ENCODE measurements at regions of chr9 and their contacts with region 1.

Region 1: GRCh38 chr9:13491493-13492424 is 212.3 kb upstream of the MPDZ start:
- DNase-seq: no peak
- H3K4me3 Mint-ChIP-seq: no peak overlapping the region
- H3K27ac Mint-ChIP-seq: peak overlapping the region; percentile 41
- H3K4me1 Mint-ChIP-seq: peaks cover 56% of the 10 kb centered on the region
- H3K27me3 Mint-ChIP-seq: no peaks in the 10 kb centered on the region
- CTCF ChIP-seq: no peak

Region 2: DNA sequence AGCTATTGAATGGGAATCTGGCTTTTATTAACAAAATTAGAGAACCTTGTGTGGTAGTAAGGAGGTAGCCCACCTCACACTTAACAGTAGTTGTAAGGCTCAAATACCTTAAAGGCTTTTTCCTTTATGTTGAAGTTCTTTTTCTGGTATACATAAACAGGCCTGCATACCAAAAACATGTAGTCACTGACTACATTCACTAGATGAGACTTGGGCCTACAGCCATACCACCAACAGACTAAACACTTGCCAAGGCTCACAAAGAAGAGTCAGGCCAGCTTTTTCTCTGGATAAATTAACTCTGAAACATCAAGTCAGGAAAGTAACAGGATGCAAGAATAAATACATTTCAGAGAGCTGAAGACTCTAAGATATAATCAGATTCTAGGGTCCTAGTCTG is 133.6 kb before region 1 on chr9:
- CTCF ChIA-PET with region 1: no interaction called
- POLR2A ChIA-PET with region 1: no interaction called
- intact Hi-C with region 1: no loop called
- DNase-seq: peak; percentile 24
- H3K4me3 Mint-ChIP-seq: no peak overlapping the region
- H3K27ac Mint-ChIP-seq: peak overlapping the region; percentile 49
- H3K4me1 Mint-ChIP-seq: peaks cover 14% of the 10 kb centered on the region
- H3K27me3 Mint-ChIP-seq: no peaks in the 10 kb centered on the region
- CTCF ChIP-seq: no peak

Region 3: DNA sequence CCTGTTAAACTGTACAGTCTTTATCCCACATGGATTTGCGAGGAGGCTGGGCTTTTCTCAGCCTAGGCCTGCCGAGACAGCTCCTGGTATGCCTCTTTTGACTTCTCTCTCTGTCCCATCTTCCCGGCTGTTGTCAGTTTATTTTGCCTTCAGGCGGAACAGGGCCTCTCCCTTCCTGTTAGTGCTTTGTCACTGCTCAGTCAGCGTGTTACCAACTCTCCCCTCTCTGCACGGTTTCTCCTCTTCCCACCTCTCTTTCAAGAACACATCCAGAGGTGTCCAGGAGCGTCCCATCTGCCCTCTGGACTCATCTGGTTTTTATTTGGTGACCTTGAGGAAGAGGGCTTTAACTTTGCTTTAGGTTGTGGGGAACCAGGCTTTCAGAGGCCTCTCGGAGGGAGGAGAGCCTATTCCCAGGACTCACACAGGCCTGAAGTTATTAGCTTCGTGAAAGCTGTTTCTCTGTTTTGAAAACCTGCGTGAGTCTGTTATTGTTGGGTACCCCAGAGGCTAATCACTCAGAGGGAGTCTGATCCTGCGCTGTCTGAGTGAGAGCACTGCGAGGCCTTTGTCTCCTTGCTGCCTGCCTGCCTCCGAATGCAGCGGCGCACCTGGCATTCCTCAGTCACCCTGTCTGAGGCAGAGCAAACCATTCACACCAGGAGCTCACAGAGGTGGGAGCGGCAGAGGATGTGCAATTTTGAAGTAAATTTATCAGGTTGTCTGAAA is 22.1 kb after region 1 on chr9:
- CTCF ChIA-PET with region 1: interaction called, 7 read pairs
- POLR2A ChIA-PET with region 1: interaction called, 22 read pairs
- intact Hi-C with region 1: no loop called
- DNase-seq: peak; percentile 69
- H3K4me3 Mint-ChIP-seq: peak overlapping the region; percentile 5
- H3K27ac Mint-ChIP-seq: peak overlapping the region; percentile 78
- H3K4me1 Mint-ChIP-seq: peaks cover 14% of the 10 kb centered on the region
- H3K27me3 Mint-ChIP-seq: no peaks in the 10 kb centered on the region
- CTCF ChIP-seq: no peak